ENCODE measurements at regions of chr1 and their contacts with region 1.

Region 1: GRCh38 chr1:5915587-5916571 is 76.3 kb downstream of the NPHP4 start:
- DNase-seq: no peak
- H3K4me3 Mint-ChIP-seq: no peak overlapping the region
- H3K27ac Mint-ChIP-seq: peak overlapping the region; percentile 64
- H3K4me1 Mint-ChIP-seq: peaks cover 9% of the 10 kb centered on the region
- H3K27me3 Mint-ChIP-seq: no peaks in the 10 kb centered on the region

Region 2: DNA sequence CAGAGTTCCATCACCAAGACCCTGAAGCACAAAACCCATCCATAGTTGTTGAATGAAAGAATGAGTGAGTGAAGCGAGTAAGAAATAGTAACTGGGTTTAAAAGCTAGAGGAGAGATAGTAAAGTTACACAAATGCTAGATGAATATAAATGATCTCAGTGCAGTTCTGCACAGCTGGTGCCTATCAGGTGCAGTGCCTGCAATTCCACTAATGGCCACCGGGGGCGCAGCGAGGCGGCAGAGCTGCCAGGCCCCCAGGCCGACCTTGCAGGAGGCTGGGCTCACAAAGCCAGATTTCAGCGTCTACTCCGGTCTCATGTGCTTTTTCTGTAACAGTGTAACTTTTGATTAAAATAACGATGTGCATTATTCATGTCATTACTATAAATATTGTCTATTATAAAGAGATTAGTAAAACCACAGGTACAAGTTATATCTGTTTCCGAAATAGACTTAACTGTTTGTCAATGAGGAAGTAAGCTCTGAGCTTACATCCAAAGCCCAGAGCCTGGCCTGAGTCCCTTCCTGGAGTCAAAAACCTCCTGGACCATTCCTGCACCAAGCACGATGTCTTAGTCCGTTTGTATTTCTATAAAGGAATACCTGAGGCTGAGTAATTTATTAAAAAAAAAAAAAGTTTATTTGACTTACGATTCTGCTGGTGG is 401.2 kb before region 1 on chr1:
- intact Hi-C with region 1: loop called (anchors 1 kb)
- DNase-seq: peak; percentile 37
- H3K4me3 Mint-ChIP-seq: no peak overlapping the region
- H3K27ac Mint-ChIP-seq: no peak overlapping the region
- H3K4me1 Mint-ChIP-seq: no peaks in the 10 kb centered on the region
- H3K27me3 Mint-ChIP-seq: peaks cover 6% of the 10 kb centered on the region

Region 3: GRCh38 chr1:5905436-5905835 is 10.4 kb before region 1 on chr1:
- intact Hi-C with region 1: no loop called
- DNase-seq: no peak
- H3K4me3 Mint-ChIP-seq: no peak overlapping the region
- H3K27ac Mint-ChIP-seq: no peak overlapping the region
- H3K4me1 Mint-ChIP-seq: peaks cover 8% of the 10 kb centered on the region
- H3K27me3 Mint-ChIP-seq: no peaks in the 10 kb centered on the region

Region 4: DNA sequence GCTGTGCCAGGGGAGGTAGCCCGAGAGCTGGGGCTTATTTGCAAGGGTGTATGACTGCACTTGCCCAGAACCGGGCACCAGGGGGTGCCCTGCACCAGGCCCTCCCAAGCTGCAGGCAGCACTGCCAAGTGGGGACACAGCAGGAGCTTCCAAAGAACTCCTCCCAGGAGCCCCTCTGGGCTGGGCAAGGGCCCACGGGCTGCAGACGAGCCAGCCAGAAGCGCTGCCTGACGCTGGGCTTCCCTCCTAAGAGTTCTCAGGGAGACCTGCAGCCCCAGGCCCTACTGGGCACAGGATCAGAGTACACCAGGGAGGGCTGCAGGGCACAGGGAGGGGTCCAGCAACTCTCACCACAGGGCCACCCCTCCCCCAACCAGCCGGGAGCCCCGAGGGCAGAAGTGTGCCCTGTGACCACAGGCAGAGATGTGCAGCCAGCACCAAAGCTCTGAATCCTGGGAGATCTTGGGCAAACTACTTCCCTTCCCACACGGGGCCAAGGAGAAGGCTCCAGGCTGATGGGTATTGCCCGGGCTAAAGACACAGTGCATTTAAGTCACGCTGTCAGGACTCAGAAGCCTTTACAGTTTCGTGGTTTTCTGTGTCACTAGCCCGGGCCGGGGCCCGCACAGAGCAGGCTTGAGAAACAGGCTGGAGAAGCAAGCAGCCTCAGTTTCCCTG is 193.2 kb after region 1 on chr1:
- intact Hi-C with region 1: no loop called
- DNase-seq: peak; percentile 25
- H3K4me3 Mint-ChIP-seq: no peak overlapping the region
- H3K27ac Mint-ChIP-seq: no peak overlapping the region
- H3K4me1 Mint-ChIP-seq: no peaks in the 10 kb centered on the region
- H3K27me3 Mint-ChIP-seq: peaks cover 8% of the 10 kb centered on the region

Measured in activated T-helper 1 cell treated with anti-CD3 and anti-CD28 coated beads, Interleukin-12 subunit alpha, Interleukin-12 subunit beta, Interleukin-2, Interleukin-4 antibody, amounts not matched to agents 30 ng/mL and 10 ng/mL and 1 ng/mL, durations not matched to agents 14 hours and 24 hours and 36 hours (primary cell).